Psoas muscle (tissue), 8 donors: ENCODE measurements at regions of chr2 and their contacts with region 1.

Region 1: GRCh38 chr2:174341286-174341994 is 6.7 kb downstream of the SP9 start:
- DNase-seq: peak; percentile 80 to 94
- ATAC-seq: peak; percentile 76 to 90 (median 82)
- H3K4me3 ChIP-seq: peak overlapping the region; percentile 47
- H3K27ac ChIP-seq: no peak overlapping the region
- H3K4me1 ChIP-seq: peaks cover 18% of the 10 kb centered on the region
- H3K27me3 ChIP-seq: peaks cover 0 to 81% (median 28%) of the 10 kb centered on the region in 3 donors
- CTCF ChIP-seq: peak; percentile 99

Region 2: DNA sequence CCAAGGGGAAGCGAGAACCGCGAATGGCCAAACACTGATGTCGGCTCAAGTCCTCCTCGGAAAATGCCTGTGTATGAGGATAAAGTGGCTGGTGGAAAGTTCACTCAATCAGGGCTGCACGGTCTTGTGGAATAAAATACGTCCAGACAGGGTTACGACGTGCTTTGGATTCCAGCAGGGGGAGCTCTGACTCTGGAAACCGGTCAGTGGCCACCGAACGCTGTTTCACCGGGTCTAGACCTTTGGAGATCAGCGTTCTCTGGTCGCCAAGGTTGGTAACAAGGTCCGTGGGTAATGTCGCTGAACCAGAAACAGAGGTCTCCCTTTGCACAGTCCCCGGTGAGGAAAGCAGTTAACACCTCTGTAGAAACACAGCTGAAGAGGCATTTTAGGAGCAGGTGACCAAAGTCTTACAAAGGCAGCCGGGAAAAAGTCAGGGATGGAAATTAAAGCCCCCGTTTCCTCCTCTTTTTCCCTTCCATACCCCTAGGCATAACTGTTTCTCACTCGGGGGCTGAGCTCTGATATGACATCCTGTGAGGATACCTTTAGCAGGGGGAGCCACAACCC is 939.0 kb before region 1 on chr2:
- intact Hi-C with region 1: loop called (anchors 5 kb)
- DNase-seq: peak; percentile 69 to 83
- ATAC-seq: peak; percentile 93 to 99 (median 96)
- H3K4me3 ChIP-seq: peak overlapping the region; percentile 56
- H3K27ac ChIP-seq: no peak overlapping the region
- H3K4me1 ChIP-seq: peaks cover 6% of the 10 kb centered on the region
- H3K27me3 ChIP-seq: peaks cover 0 to 2% (median 0%) of the 10 kb centered on the region in 3 donors
- CTCF ChIP-seq: peak; percentile 86

Region 3: GRCh38 chr2:173884025-173884802 is 457.2 kb before region 1 on chr2:
- intact Hi-C with region 1: loop called in 1 of 2 experiments (anchors 10 kb)
- DNase-seq: peak; percentile 35 to 58
- ATAC-seq: peak in 3 of 4 donors; percentile 37 to 74 (median 57)
- H3K4me3 ChIP-seq: no peak overlapping the region
- H3K27ac ChIP-seq: no peak overlapping the region
- H3K4me1 ChIP-seq: peaks cover 6% of the 10 kb centered on the region
- H3K27me3 ChIP-seq: peaks cover 0 to 2% (median 0%) of the 10 kb centered on the region in 3 donors
- CTCF ChIP-seq: peak; percentile 63

Region 4: DNA sequence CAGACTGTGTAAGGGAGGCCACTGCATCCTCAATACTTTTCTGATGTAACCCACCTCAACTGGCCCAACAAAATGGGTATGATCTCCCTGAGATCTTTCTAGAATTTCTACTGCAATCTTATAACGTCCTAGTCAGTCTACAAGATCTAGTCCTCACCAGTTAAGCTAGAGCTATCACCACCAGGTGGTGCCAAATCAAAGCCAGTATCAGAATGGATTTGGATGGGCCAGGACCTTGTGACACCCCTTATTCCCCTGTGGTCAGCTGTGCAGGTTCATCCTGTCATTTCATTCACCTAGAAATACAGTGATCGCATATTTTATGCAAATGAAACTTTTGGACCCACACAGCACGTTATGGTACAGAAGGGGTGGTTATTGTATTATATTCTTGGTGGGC is 183.4 kb before region 1 on chr2:
- intact Hi-C with region 1: loop called (anchors 1 to 10 kb)
- DNase-seq: no peak
- ATAC-seq: peak; percentile 64 to 88 (median 84)
- H3K4me3 ChIP-seq: no peak overlapping the region
- H3K27ac ChIP-seq: no peak overlapping the region
- H3K4me1 ChIP-seq: no peaks in the 10 kb centered on the region
- H3K27me3 ChIP-seq: no peaks in the 10 kb centered on the region
- CTCF ChIP-seq: peak; percentile 50

Region 5: GRCh38 chr2:174248187-174248997 is 93.0 kb before region 1 on chr2 and contains the start of gene OLA1:
- intact Hi-C with region 1: loop called in 1 of 2 experiments (anchors 5 kb)
- DNase-seq: peak; percentile 96 to 98
- ATAC-seq: peak; percentile 99 to 100 (median 100)
- H3K4me3 ChIP-seq: peak within 1 kb of the TSS; percentile 66
- H3K27ac ChIP-seq: peak within 1 kb of the TSS; percentile 93
- H3K4me1 ChIP-seq: peaks cover 10% of the 10 kb centered on the region
- H3K27me3 ChIP-seq: no peaks in the 10 kb centered on the region
- CTCF ChIP-seq: peak; percentile 7
- total RNA-seq, gene OLA1: 86.8 to 125 (median 115) TPM